Activated B cell treated with CpG ODN at 0.5 μM for 24 hours (primary cell): ENCODE measurements at regions of chr3 and their contacts with region 1.

Region 1: GRCh38 chr3:16378920-16379319 is 113.9 kb downstream of the OXNAD1 start:
- DNase-seq: no peak
- ATAC-seq: peak; percentile 49
- H3K4me3 Mint-ChIP-seq: peak overlapping the region; percentile 51
- H3K27ac Mint-ChIP-seq: peak overlapping the region; percentile 90
- H3K4me1 Mint-ChIP-seq: peaks cover 94% of the 10 kb centered on the region
- H3K27me3 Mint-ChIP-seq: no peaks in the 10 kb centered on the region
- CTCF ChIP-seq: no peak

Region 2: DNA sequence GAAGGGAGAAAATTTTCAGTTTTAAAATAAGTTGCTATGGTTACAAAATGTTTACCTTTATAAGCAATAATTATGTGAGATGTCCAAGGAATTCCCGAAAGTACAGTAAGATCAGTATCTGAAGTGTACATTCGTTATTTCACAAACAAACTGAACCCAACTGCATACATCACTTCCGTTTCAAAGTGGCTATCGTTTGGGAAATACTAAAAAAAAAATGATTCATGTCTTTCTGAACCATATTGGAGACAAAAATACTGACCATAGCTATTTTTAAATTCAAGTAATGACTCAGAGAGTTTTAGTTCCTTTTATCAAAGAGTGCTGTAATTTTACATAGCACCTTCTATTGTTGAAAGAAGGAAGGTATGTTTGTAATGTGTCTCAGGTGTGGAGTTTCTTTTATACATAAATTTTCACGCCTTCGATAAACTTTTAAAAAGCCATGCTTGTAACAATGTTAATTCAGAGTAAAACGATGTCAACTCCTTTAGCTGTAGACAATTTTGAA is 573.1 kb before region 1 on chr3:
- CTCF ChIA-PET with region 1: no interaction called
- POLR2A ChIA-PET with region 1: no interaction called
- intact Hi-C with region 1: loop called (anchors 10 kb)
- DNase-seq: no peak
- ATAC-seq: peak; percentile 83
- H3K4me3 Mint-ChIP-seq: peak overlapping the region; percentile 45
- H3K27ac Mint-ChIP-seq: peak overlapping the region; percentile 80
- H3K4me1 Mint-ChIP-seq: peaks cover 60% of the 10 kb centered on the region
- H3K27me3 Mint-ChIP-seq: no peaks in the 10 kb centered on the region
- CTCF ChIP-seq: no peak

Region 3: GRCh38 chr3:16388850-16389441 is 10.0 kb after region 1 on chr3:
- CTCF ChIA-PET with region 1: interaction called, 3 read pairs
- POLR2A ChIA-PET with region 1: interaction called, 5 read pairs
- intact Hi-C with region 1: loop called (anchors 1 kb)
- DNase-seq: no peak
- ATAC-seq: no peak
- H3K4me3 Mint-ChIP-seq: no peak overlapping the region
- H3K27ac Mint-ChIP-seq: no peak overlapping the region
- H3K4me1 Mint-ChIP-seq: peaks cover 39% of the 10 kb centered on the region
- H3K27me3 Mint-ChIP-seq: no peaks in the 10 kb centered on the region
- CTCF ChIP-seq: no peak

Region 4: GRCh38 chr3:16516695-16517481 is 138.0 kb after region 1 on chr3:
- CTCF ChIA-PET with region 1: interaction called, 4 read pairs
- POLR2A ChIA-PET with region 1: interaction called, 202 read pairs
- intact Hi-C with region 1: no loop called
- DNase-seq: no peak
- ATAC-seq: no peak
- H3K4me3 Mint-ChIP-seq: peak overlapping the region; percentile 97
- H3K27ac Mint-ChIP-seq: peak overlapping the region; percentile 77
- H3K4me1 Mint-ChIP-seq: peaks cover 87% of the 10 kb centered on the region
- H3K27me3 Mint-ChIP-seq: no peaks in the 10 kb centered on the region
- CTCF ChIP-seq: no peak

Region 5: DNA sequence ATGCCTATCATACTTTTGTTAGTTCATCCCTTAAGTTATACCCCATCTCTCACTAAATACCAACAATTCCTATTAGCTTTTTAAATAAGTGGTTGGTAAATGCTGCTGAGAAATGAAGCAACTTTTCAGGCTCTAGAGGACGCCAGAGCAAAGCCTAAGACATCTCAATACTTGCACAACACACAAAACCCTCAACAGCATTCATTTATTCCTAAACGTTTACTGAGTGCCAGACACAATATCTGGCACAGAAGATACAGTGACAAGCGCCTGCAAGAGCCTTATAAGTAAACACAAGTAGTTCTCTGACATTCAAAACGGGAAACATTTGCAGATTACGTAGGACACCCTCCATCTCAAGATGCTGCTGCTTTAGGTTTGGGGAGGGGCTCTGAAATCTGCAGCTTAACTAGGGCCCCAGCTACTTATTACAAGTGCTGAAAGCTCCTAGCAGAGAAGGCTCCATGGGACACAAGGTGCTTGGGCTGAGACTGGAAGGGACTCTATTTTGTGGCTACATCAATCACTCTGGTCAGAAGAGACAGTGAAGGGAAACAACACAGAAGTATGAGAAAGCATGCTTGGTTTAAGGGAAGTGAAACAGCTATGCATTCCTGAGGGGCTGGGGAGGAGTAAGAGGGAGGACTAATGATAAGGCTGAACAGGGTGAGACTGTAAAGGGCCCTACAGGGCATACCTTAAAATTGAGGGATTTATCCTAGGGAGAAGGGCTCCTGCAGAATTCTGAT is 817.1 kb after region 1 on chr3:
- CTCF ChIA-PET with region 1: no interaction called
- POLR2A ChIA-PET with region 1: no interaction called
- intact Hi-C with region 1: loop called (anchors 10 kb)
- DNase-seq: peak; percentile 22
- ATAC-seq: peak; percentile 86
- H3K4me3 Mint-ChIP-seq: peak overlapping the region; percentile 56
- H3K27ac Mint-ChIP-seq: peak overlapping the region; percentile 91
- H3K4me1 Mint-ChIP-seq: peaks cover 44% of the 10 kb centered on the region
- H3K27me3 Mint-ChIP-seq: no peaks in the 10 kb centered on the region
- CTCF ChIP-seq: no peak